CD14-positive monocyte (primary cell): ENCODE measurements at regions of chr4 and their contacts with region 1.

Region 1: GRCh38 chr4:110049951-110050925 is 137.6 kb downstream of the EGF start:
- DNase-seq: peak; percentile 17 to 51 (median 44)
- H3K4me3 ChIP-seq: no peak overlapping the region
- H3K4me3 Mint-ChIP-seq: peak overlapping the region in 1 of 2 donors; percentile 73
- H3K27ac ChIP-seq: no peak overlapping the region
- H3K27ac Mint-ChIP-seq: no peak overlapping the region
- H3K4me1 ChIP-seq: no peaks in the 10 kb centered on the region
- H3K4me1 Mint-ChIP-seq: no peaks in the 10 kb centered on the region
- H3K27me3 ChIP-seq: peaks cover 48 to 52% of the 10 kb centered on the region in 2 donors
- H3K27me3 Mint-ChIP-seq: peaks cover 28 to 57% (median 30%) of the 10 kb centered on the region in 3 donors
- CTCF ChIP-seq: peak; percentile 86

Region 2: DNA sequence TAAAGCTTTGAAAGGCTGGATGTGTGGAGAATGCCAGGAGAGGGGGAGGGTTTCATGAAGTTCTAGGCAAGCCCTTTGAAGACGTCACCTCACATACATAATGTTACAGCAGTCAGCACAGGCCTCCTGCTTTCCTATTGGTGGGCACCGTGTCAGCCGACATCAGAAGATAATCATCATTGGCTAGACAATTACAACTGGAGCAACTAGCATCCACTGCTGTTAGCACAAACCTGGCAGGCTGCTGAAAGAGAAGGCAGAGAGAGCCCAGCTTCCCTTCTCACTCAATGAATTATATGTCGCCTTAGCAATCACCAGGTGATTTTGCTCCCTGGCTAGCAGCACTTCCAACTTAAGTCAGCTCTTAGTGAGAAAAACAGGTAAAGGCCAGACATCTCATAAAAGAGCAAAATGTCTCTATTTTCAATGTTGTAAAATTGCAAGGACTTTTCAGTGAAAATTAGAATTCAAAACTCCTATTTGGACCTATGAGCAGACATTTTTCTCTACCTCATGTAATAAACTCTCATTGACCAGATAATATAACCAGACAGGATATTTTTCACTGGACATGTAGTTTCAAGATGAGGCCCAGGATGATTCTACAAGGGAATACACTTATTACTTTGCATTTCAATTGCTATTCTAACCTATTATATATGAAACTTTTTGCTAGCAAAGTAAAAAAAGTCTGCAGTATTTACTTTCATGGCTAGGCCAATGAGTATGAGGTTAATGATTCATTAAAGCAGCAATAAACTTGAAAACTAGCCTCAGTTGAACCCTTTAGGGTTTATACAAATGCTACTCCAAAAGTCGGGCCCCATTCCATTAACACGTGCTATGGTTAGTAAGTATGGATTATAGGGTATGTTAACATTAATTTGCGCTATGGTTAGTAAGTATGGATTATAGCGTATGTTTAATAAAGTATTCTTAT is 143.9 kb after region 1 on chr4:
- intact Hi-C with region 1: loop called in 1 of 2 experiments (anchors 10 kb)
- DNase-seq: peak; percentile 18 to 43 (median 40)
- H3K4me3 ChIP-seq: no peak overlapping the region
- H3K4me3 Mint-ChIP-seq: peak overlapping the region in 1 of 2 donors; percentile 1
- H3K27ac ChIP-seq: no peak overlapping the region
- H3K27ac Mint-ChIP-seq: no peak overlapping the region
- H3K4me1 ChIP-seq: peaks cover 23 to 31% of the 10 kb centered on the region in 2 donors
- H3K4me1 Mint-ChIP-seq: peaks cover 30% of the 10 kb centered on the region
- H3K27me3 ChIP-seq: peaks cover 1 to 26% of the 10 kb centered on the region in 2 donors
- H3K27me3 Mint-ChIP-seq: peaks cover 18 to 30% (median 26%) of the 10 kb centered on the region in 3 donors
- CTCF ChIP-seq: no peak

Region 3: GRCh38 chr4:110201502-110201901 is 151.3 kb after region 1 on chr4:
- intact Hi-C with region 1: loop called (anchors 10 kb)
- DNase-seq: no peak
- H3K4me3 ChIP-seq: no peak overlapping the region
- H3K4me3 Mint-ChIP-seq: no peak overlapping the region
- H3K27ac ChIP-seq: no peak overlapping the region
- H3K27ac Mint-ChIP-seq: no peak overlapping the region
- H3K4me1 ChIP-seq: peaks cover 21 to 27% of the 10 kb centered on the region in 2 donors
- H3K4me1 Mint-ChIP-seq: peaks cover 22% of the 10 kb centered on the region
- H3K27me3 ChIP-seq: peaks cover 4 to 35% of the 10 kb centered on the region in 2 donors
- H3K27me3 Mint-ChIP-seq: peaks cover 41 to 49% (median 43%) of the 10 kb centered on the region in 3 donors
- CTCF ChIP-seq: no peak